GM23248 (cell line): ENCODE measurements at regions of chr1 and their contacts with region 1.

Region 1: GRCh38 chr1:3624200-3625136 is at the start of gene TPRG1L:
- DNase-seq: peak; percentile 99
- H3K4me3 ChIP-seq: peak within 1 kb of the TSS; percentile 97
- H3K27ac ChIP-seq: peak within 1 kb of the TSS; percentile 65
- H3K4me1 ChIP-seq: peaks cover 14% of the 10 kb centered on the region; the same call in 1 of the 2 replicates
- H3K27me3 ChIP-seq: no peaks in the 10 kb centered on the region
- total RNA-seq, gene TPRG1L: 27.6 and 30.9 TPM in 2 replicates

Region 2: GRCh38 chr1:3366126-3367051 is 258.1 kb before region 1 on chr1:
- in situ Hi-C with region 1: no loop called
- DNase-seq: peak; percentile 59
- H3K4me3 ChIP-seq: no peak overlapping the region
- H3K27ac ChIP-seq: no peak overlapping the region
- H3K4me1 ChIP-seq: peaks cover 21% of the 10 kb centered on the region
- H3K27me3 ChIP-seq: peaks cover 21% of the 10 kb centered on the region; the same call in 1 of the 2 replicates

Region 3: GRCh38 chr1:3483801-3484444 is 140.5 kb before region 1 on chr1:
- in situ Hi-C with region 1: loop called (anchors 10 kb)
- DNase-seq: peak; percentile 53
- H3K4me3 ChIP-seq: no peak overlapping the region
- H3K27ac ChIP-seq: no peak overlapping the region
- H3K4me1 ChIP-seq: no peaks in the 10 kb centered on the region
- H3K27me3 ChIP-seq: peaks cover 14% of the 10 kb centered on the region; the same call in 1 of the 2 replicates